Activated CD4-positive, alpha-beta T cell treated with anti-CD3 and anti-CD28 coated beads, Interleukin-2, amount 10 ng/mL, durations not matched to agents 24 days and 14 days (primary cell): ENCODE measurements at regions of chr11 and their contacts with region 1.

Region 1: GRCh38 chr11:59283825-59284772 is 71.4 kb upstream of the MPEG1 start:
- DNase-seq: peak; percentile 82
- H3K4me3 Mint-ChIP-seq: peak overlapping the region; percentile 73
- H3K27ac Mint-ChIP-seq: no peak overlapping the region
- H3K4me1 Mint-ChIP-seq: peaks cover 7% of the 10 kb centered on the region
- H3K27me3 Mint-ChIP-seq: peaks cover 18% of the 10 kb centered on the region

Region 2: GRCh38 chr11:59207988-59208451 is 76.1 kb before region 1 on chr11:
- intact Hi-C with region 1: loop called (anchors 2 kb)
- DNase-seq: peak; percentile 73
- H3K4me3 Mint-ChIP-seq: peak overlapping the region; percentile 59
- H3K27ac Mint-ChIP-seq: peak overlapping the region; percentile 64
- H3K4me1 Mint-ChIP-seq: peaks cover 29% of the 10 kb centered on the region
- H3K27me3 Mint-ChIP-seq: peaks cover 56% of the 10 kb centered on the region

Region 3: DNA sequence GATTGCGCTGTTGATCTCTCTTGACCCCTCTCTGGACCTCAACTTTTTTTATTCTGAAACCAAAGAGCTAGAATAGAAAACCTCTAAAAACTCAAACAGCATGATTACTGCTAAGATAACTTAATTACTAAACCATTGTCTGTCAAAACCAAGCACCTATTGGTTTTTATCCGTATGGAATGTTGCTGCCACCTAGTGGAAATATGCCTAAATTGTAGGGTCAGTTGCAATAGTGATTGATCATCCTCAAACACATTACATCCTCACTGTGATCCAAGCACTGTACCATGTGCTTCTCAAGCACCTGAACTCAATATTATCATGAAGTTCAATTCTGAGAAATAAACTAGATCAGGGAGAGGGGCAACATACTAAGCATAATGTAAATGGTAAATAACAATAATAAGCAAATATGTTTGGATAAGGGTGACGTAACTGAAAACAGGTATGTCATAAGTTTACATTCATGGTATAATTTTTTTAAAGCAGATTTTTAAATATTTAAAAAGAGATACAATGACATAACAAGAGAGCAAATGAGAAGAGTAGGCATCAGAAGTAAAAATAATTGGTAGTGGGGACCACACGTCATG is 145.9 kb after region 1 on chr11:
- intact Hi-C with region 1: loop called (anchors 5 kb)
- DNase-seq: peak; percentile 85
- H3K4me3 Mint-ChIP-seq: no peak overlapping the region
- H3K27ac Mint-ChIP-seq: no peak overlapping the region
- H3K4me1 Mint-ChIP-seq: no peaks in the 10 kb centered on the region
- H3K27me3 Mint-ChIP-seq: peaks cover 17% of the 10 kb centered on the region

Region 4: DNA sequence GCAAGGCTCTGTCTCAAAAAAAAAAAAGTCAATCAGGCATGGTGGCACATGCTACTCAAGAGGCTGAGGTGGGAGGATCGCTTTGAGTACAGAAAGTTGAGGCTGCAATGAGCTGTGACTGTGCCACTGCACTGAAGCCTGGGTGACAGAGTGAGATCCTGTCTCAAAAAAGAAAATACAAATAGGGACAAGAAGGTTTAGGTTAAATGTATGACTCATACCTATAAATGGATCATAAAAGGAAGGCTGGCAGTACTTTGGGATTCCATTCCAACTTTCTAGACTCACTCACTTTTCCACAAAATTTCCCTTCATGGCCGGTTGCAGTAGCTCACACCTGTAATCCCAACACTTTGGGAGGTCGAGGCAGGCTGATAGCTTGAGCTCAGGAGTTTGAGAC is 357.1 kb after region 1 on chr11:
- intact Hi-C with region 1: no loop called
- DNase-seq: no peak
- H3K4me3 Mint-ChIP-seq: no peak overlapping the region
- H3K27ac Mint-ChIP-seq: no peak overlapping the region
- H3K4me1 Mint-ChIP-seq: peaks cover 2% of the 10 kb centered on the region
- H3K27me3 Mint-ChIP-seq: no peaks in the 10 kb centered on the region